ENCODE measurements at regions of chr7 and their contacts with region 1.

Region 1: GRCh38 chr7:25565949-25566348 is 337.7 kb upstream of the NPVF start:
- DNase-seq: peak; percentile 69
- H3K4me3 ChIP-seq: no peak overlapping the region
- H3K27ac ChIP-seq: no peak overlapping the region
- H3K4me1 ChIP-seq: peaks cover 7% of the 10 kb centered on the region
- CTCF ChIP-seq: peak; percentile 100

Region 2: DNA sequence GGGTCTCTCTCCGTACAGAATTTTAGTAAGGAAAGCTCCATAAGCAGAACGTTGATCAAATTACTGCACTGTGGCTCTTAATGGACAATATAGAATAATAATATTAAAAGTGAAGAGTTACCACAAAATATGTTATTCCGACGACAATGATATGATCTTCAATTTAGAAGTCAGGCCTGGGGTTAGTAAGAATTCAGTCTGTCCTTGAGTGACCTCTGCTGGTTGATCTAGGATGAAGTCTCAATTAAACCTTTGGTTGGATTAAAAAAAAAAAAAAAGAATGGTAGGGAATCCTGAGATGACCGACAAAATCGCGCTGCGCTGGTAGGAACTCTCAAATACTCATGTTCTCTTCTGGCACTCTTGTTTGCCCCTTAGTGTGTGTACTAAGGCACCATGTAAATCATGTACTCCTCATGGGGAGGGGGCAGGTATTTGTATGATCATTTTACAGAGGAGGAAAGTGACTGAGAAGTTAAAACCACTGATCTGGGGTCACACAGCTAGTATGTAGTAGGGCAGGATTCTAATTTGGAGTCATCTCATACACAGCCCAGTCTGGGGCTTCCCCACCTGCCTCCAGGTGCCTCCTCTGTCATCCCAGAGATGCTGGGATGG is 176.4 kb before region 1 on chr7:
- CTCF ChIA-PET with region 1: no interaction called
- POLR2A ChIA-PET with region 1: interaction called, 3 read pairs
- intact Hi-C with region 1: loop called (anchors 2 kb)
- DNase-seq: peak; percentile 50
- H3K4me3 ChIP-seq: no peak overlapping the region
- H3K27ac ChIP-seq: no peak overlapping the region
- H3K4me1 ChIP-seq: no peaks in the 10 kb centered on the region
- CTCF ChIP-seq: peak; percentile 82

Measured in OCI-LY7 (cell line).